ENCODE measurements at regions of chr19 and their contacts with region 1.

Region 1: GRCh38 chr19:34220472-34221063 is 33.8 kb upstream of the GARRE1 start:
- DNase-seq: peak; percentile 81
- ATAC-seq: no peak
- H3K4me3 Mint-ChIP-seq: no peak overlapping the region
- H3K27ac Mint-ChIP-seq: no peak overlapping the region
- H3K4me1 Mint-ChIP-seq: peaks cover 59% of the 10 kb centered on the region
- H3K27me3 Mint-ChIP-seq: no peaks in the 10 kb centered on the region

Region 2: GRCh38 chr19:34120846-34121639 is 99.5 kb before region 1 on chr19:
- CTCF ChIA-PET with region 1: interaction called, 4 read pairs
- POLR2A ChIA-PET with region 1: no interaction called
- intact Hi-C with region 1: loop called in 1 of 2 experiments (anchors 5 kb)
- DNase-seq: peak; percentile 78
- ATAC-seq: peak; percentile 84
- H3K4me3 Mint-ChIP-seq: no peak overlapping the region
- H3K27ac Mint-ChIP-seq: no peak overlapping the region
- H3K4me1 Mint-ChIP-seq: peaks cover 20% of the 10 kb centered on the region
- H3K27me3 Mint-ChIP-seq: no peaks in the 10 kb centered on the region

Region 3: DNA sequence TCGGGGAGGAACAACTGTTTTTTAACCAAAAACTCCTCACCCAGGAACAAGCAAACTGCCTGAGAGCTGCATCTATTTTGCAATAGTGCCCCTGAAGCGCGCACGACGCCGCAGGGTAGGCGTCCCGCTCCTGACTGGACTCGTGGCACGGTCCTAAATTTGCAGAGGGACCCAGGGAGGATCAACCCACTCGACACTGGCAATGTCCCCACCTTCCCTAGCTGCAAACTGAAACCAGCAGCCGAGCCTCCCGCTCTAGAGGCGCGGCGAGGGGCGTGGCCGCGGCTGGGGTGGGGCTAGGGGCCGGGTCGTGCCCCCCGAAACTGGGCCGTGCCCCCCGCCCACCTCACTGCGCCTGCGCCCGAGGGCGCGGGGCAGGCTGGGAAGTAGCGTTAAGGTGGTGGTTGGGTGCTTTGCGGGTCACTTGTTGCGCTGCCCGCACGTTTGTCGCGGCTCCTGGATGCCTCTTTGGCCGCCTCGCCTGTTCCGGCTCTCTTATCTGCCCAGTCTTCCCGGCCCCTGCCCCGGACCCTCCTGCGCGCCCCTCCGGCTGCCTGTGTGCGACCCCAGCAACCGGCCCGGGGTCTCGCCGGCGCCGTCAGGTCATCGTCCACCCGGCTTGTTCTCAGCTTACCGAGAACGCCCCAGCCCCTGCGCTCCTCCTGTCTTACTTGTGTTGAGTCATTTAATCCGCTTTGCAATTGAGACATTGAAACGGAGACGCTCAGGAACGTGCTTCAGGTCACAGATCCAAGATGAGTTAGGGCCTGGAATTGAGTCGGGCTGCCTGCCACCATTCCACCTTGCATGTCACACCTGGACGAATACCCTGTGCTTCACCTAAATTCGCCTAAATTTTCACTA is 86.1 kb before region 1 on chr19:
- CTCF ChIA-PET with region 1: interaction called, 3 read pairs
- POLR2A ChIA-PET with region 1: no interaction called
- intact Hi-C with region 1: loop called in 1 of 2 experiments (anchors 1 kb)
- DNase-seq: peak; percentile 94
- ATAC-seq: peak; percentile 94
- H3K4me3 Mint-ChIP-seq: peak overlapping the region; percentile 92
- H3K27ac Mint-ChIP-seq: peak overlapping the region; percentile 95
- H3K4me1 Mint-ChIP-seq: peaks cover 9% of the 10 kb centered on the region
- H3K27me3 Mint-ChIP-seq: no peaks in the 10 kb centered on the region

Region 4: DNA sequence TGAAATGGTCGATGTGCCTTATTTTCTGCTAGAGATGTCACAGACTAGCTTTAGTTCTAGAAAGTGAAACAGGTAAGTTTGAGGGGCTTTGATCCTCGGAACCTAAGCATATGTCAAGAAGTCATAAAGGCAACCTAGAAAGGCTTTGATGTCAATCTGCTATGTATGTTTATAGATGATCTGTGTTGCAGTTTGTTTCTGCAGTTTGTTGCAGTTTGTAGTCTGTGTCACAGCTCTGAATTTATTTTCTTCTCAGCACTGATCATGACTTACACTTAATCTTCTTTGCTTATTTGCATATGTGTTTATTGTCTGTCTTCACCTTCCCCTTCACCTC is 42.3 kb before region 1 on chr19:
- CTCF ChIA-PET with region 1: interaction called, 12 read pairs
- POLR2A ChIA-PET with region 1: interaction called, 3 read pairs
- intact Hi-C with region 1: loop called in 1 of 2 experiments (anchors 2 kb)
- DNase-seq: no peak
- ATAC-seq: peak; percentile 62
- H3K4me3 Mint-ChIP-seq: peak overlapping the region; percentile 43
- H3K27ac Mint-ChIP-seq: peak overlapping the region; percentile 47
- H3K4me1 Mint-ChIP-seq: peaks cover 79% of the 10 kb centered on the region
- H3K27me3 Mint-ChIP-seq: no peaks in the 10 kb centered on the region

Region 5: GRCh38 chr19:34232566-34233481 is 12.3 kb after region 1 on chr19:
- CTCF ChIA-PET with region 1: interaction called, 10 read pairs
- POLR2A ChIA-PET with region 1: no interaction called
- intact Hi-C with region 1: loop called in 1 of 2 experiments (anchors 2 kb)
- DNase-seq: peak; percentile 53
- ATAC-seq: peak; percentile 87
- H3K4me3 Mint-ChIP-seq: no peak overlapping the region
- H3K27ac Mint-ChIP-seq: peak overlapping the region; percentile 80
- H3K4me1 Mint-ChIP-seq: peaks cover 31% of the 10 kb centered on the region
- H3K27me3 Mint-ChIP-seq: no peaks in the 10 kb centered on the region

Measured in activated CD4-positive, alpha-beta T cell treated with anti-CD3 and anti-CD28 coated beads for 36 hours (primary cell).